Testis (tissue), 5 donors: ENCODE measurements at regions of chr1 and their contacts with region 1.

Region 1: GRCh38 chr1:224454397-224455066 is 19.9 kb upstream of the WDR26 start:
- DNase-seq: no peak
- H3K4me3 ChIP-seq: no peak overlapping the region
- H3K27ac ChIP-seq: no peak overlapping the region
- H3K4me1 ChIP-seq: peaks cover 15% of the 10 kb centered on the region
- H3K27me3 ChIP-seq: no peaks in the 10 kb centered on the region
- CTCF ChIP-seq: no peak
- POLR2A ChIP-seq: no peak

Region 2: GRCh38 chr1:224182866-224183590 is 271.5 kb before region 1 on chr1 and contains the start of gene DEGS1:
- intact Hi-C with region 1: loop called (anchors 10 kb)
- DNase-seq: peak; percentile 88
- H3K4me3 ChIP-seq: peak within 1 kb of the TSS; percentile 78 to 98
- H3K27ac ChIP-seq: peak within 1 kb of the TSS; percentile 87 to 96
- H3K4me1 ChIP-seq: peaks cover 13% of the 10 kb centered on the region
- H3K27me3 ChIP-seq: no peaks in the 10 kb centered on the region
- CTCF ChIP-seq: no peak
- POLR2A ChIP-seq: peak; percentile 84
- total RNA-seq, gene DEGS1: 58.1 to 60.5 TPM

Region 3: DNA sequence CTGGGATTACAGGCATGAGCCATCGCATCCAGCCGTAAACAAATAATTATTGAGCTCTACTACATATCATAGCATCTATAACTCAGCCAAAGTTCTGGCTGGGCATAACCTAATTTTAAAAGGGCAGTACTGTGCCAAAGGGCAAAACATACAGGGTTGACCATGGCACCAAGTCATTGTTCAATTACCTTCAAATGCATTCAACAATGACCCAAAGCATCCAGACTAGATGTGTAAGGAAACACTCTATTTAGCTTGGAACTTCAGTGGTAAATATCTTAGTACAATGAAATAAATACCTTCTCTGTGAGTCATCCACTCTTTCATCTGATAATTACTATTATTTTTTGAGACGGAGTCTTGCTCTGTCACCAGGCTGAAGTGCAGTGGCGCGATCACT is 194.6 kb before region 1 on chr1:
- intact Hi-C with region 1: no loop called
- DNase-seq: no peak
- H3K4me3 ChIP-seq: no peak overlapping the region
- H3K27ac ChIP-seq: no peak overlapping the region
- H3K4me1 ChIP-seq: no peaks in the 10 kb centered on the region
- H3K27me3 ChIP-seq: no peaks in the 10 kb centered on the region
- CTCF ChIP-seq: no peak
- POLR2A ChIP-seq: no peak